ENCODE measurements at regions of chr2 and their contacts with region 1.

Region 1: GRCh38 chr2:237060534-237061312 is 25.0 kb upstream of the COPS8 start:
- DNase-seq: no peak
- ATAC-seq: peak; percentile 75
- H3K4me3 ChIP-seq: no peak overlapping the region
- H3K27ac ChIP-seq: no peak overlapping the region
- H3K4me1 ChIP-seq: no peaks in the 10 kb centered on the region
- H3K27me3 ChIP-seq: no peaks in the 10 kb centered on the region

Region 2: GRCh38 chr2:235766278-235766677 is 1294.4 kb before region 1 on chr2:
- intact Hi-C with region 1: loop called (anchors 10 kb)
- DNase-seq: no peak
- ATAC-seq: peak; percentile 91
- H3K4me3 ChIP-seq: no peak overlapping the region
- H3K27ac ChIP-seq: no peak overlapping the region
- H3K4me1 ChIP-seq: no peaks in the 10 kb centered on the region
- H3K27me3 ChIP-seq: no peaks in the 10 kb centered on the region

Region 3: GRCh38 chr2:235779444-235779896 is 1281.3 kb before region 1 on chr2:
- intact Hi-C with region 1: loop called in 1 of 2 experiments (anchors 10 kb)
- DNase-seq: peak; percentile 78 to 88
- ATAC-seq: no peak
- H3K4me3 ChIP-seq: no peak overlapping the region
- H3K27ac ChIP-seq: no peak overlapping the region
- H3K4me1 ChIP-seq: no peaks in the 10 kb centered on the region
- H3K27me3 ChIP-seq: no peaks in the 10 kb centered on the region

Region 4: DNA sequence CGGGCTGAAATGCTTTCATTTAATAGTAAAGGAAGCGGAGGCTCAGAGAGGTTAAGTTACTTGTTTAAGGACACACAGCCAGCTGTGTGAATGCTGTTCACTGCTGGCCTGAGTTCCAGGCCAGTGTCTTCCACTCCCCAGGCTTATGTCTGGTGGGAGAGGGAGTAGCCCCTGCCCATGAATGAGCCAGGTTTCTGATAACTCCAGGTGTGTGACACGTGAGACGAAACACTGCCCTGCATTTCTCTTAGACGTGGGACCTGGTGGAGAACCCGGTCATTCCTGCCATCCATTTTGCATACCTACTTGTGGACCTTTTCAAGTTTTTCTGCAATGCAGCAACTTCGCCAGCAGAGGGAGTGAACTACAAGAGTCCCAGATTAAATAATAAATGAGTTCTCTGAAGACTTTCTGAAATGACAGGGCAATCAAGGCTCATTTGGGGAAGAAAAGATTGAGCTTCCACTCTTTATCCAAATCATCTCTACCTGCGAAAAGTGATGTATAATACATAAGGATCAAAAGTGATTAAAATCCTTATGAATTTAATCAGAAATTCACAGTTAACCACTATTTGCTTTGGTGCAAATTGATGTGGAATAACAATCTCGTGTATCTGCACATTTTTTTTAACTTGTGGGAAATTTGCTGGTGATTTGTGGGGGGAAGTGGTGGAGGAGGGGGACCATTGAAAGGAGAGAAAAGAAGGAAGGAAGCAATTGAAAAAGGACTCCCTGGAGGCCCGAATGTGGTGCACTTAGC is 717.1 kb before region 1 on chr2:
- intact Hi-C with region 1: loop called in 1 of 2 experiments (anchors 2 kb)
- DNase-seq: peak in 1 of 2 donors; percentile 67
- ATAC-seq: no peak
- H3K4me3 ChIP-seq: no peak overlapping the region
- H3K27ac ChIP-seq: no peak overlapping the region
- H3K4me1 ChIP-seq: no peaks in the 10 kb centered on the region
- H3K27me3 ChIP-seq: no peaks in the 10 kb centered on the region

Region 5: GRCh38 chr2:236352761-236353593 is 707.7 kb before region 1 on chr2:
- intact Hi-C with region 1: loop called (anchors 2 to 5 kb)
- DNase-seq: no peak
- ATAC-seq: no peak
- H3K4me3 ChIP-seq: no peak overlapping the region
- H3K27ac ChIP-seq: no peak overlapping the region
- H3K4me1 ChIP-seq: no peaks in the 10 kb centered on the region
- H3K27me3 ChIP-seq: no peaks in the 10 kb centered on the region

Region 6: GRCh38 chr2:236512902-236513435 is 547.8 kb before region 1 on chr2:
- intact Hi-C with region 1: loop called in 1 of 2 experiments (anchors 5 kb)
- DNase-seq: peak; percentile 71 to 85
- ATAC-seq: peak; percentile 81
- H3K4me3 ChIP-seq: no peak overlapping the region
- H3K27ac ChIP-seq: no peak overlapping the region
- H3K4me1 ChIP-seq: peaks cover 0 to 1% of the 10 kb centered on the region in 2 donors
- H3K27me3 ChIP-seq: no peaks in the 10 kb centered on the region